ENCODE measurements at regions of chr7 and their contacts with region 1.

Region 1: DNA sequence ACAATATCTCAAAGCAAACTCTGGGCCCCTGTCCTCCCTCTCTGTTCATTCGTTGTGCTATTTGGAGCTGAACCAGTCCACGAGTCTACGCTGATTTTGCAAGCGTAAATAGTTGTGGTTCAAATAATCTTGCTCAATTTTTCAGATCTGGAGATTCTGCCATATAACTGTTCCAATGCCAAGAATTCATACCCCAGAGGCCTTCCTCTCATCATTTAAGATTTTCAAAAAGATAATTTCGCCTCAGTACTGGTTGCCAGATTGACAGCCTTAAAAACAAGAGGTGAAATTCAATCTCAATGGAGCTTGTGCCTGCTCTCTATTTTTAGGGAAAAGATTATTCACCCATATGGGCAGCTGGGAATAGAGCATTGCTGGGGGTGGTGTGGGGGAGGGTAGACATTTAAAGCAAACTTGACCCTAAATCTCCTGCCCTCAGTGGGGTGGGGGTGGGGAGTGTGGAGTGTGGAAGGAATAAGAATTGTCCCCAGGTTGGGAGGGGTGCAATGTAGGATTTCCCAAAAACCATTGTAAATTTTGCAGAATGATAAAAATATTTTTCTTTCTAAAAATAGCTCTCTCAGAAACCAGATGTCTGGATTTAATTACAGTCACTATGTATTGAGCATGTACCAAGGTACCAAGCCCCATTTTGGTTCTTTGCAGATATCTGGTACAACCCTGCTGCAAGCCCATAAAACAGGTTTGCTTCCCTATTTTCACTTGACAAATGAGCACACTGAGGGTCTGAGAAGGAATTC is 104.7 kb upstream of the EEPD1 start:
- DNase-seq: no peak
- H3K4me3 ChIP-seq: no peak overlapping the region
- H3K27ac ChIP-seq: no peak overlapping the region
- H3K4me1 ChIP-seq: peaks cover 2 to 14% (median 6%) of the 10 kb centered on the region in 4 experiments; a peak in 4 of 7 replicates
- H3K27me3 ChIP-seq: no peaks in the 10 kb centered on the region
- CTCF ChIP-seq: no peak
- EP300 ChIP-seq: no peak
- POLR2A ChIP-seq: no peak
- RAD21 ChIP-seq: no peak

Region 2: GRCh38 chr7:35991511-35992232 is 56.6 kb before region 1 on chr7:
- CTCF ChIA-PET with region 1: no interaction called
- POLR2A ChIA-PET with region 1: no interaction called
- DNase-seq: no peak
- H3K4me3 ChIP-seq: no peak overlapping the region
- H3K27ac ChIP-seq: no peak overlapping the region
- H3K4me1 ChIP-seq: no peaks in the 10 kb centered on the region
- H3K27me3 ChIP-seq: no peaks in the 10 kb centered on the region
- CTCF ChIP-seq: no peak
- EP300 ChIP-seq: no peak
- POLR2A ChIP-seq: no peak
- RAD21 ChIP-seq: no peak

Region 3: GRCh38 chr7:36029853-36030515 is 18.3 kb before region 1 on chr7:
- CTCF ChIA-PET with region 1: interaction called, 10 read pairs
- POLR2A ChIA-PET with region 1: no interaction called
- DNase-seq: no peak
- H3K4me3 ChIP-seq: no peak overlapping the region
- H3K27ac ChIP-seq: no peak overlapping the region
- H3K4me1 ChIP-seq: peaks cover 0 to 5% (median 0%) of the 10 kb centered on the region in 4 experiments; a peak in 2 of 7 replicates
- H3K27me3 ChIP-seq: no peaks in the 10 kb centered on the region
- CTCF ChIP-seq: no peak
- EP300 ChIP-seq: no peak
- POLR2A ChIP-seq: no peak
- RAD21 ChIP-seq: no peak

Region 4: GRCh38 chr7:36037121-36037662 is 11.1 kb before region 1 on chr7:
- CTCF ChIA-PET with region 1: interaction called, 12 read pairs
- POLR2A ChIA-PET with region 1: interaction called, 4 read pairs
- DNase-seq: no peak
- H3K4me3 ChIP-seq: no peak overlapping the region
- H3K27ac ChIP-seq: no peak overlapping the region
- H3K4me1 ChIP-seq: peaks cover 3 to 12% (median 3%) of the 10 kb centered on the region in 4 experiments; a peak in 4 of 7 replicates
- H3K27me3 ChIP-seq: no peaks in the 10 kb centered on the region
- CTCF ChIP-seq: no peak
- EP300 ChIP-seq: no peak
- POLR2A ChIP-seq: no peak
- RAD21 ChIP-seq: no peak